ENCODE measurements at regions of chr4 and their contacts with region 1.

Region 1: DNA sequence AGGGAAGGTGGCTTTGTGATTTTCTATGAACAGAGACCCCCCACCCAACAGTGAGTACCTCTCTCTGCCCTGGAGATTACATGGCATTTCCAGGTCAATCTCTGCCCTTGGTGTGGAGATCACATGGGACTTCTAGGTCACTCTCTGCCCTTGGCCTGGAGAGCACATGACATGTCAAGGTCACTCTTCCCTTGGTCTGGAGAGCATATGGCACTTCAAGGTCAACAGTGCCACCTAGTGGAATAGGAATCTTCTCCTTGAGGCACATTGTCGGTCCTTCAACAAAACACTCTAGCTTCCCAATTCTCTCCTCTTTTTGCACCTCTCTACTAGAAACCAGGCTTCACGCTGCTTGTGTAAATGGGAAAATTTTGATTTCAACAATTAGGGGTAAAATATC is 66.2 kb upstream of the TACR3 start:
- DNase-seq: peak; percentile 2
- H3K4me3 Mint-ChIP-seq: no peak overlapping the region
- H3K27ac Mint-ChIP-seq: no peak overlapping the region
- H3K4me1 Mint-ChIP-seq: no peaks in the 10 kb centered on the region
- H3K27me3 Mint-ChIP-seq: no peaks in the 10 kb centered on the region
- CTCF ChIP-seq: peak; percentile 49

Region 2: GRCh38 chr4:103478729-103479128 is 307.3 kb before region 1 on chr4:
- CTCF ChIA-PET with region 1: no interaction called
- intact Hi-C with region 1: loop called (anchors 5 kb)
- DNase-seq: no peak
- H3K4me3 Mint-ChIP-seq: no peak overlapping the region
- H3K27ac Mint-ChIP-seq: no peak overlapping the region
- H3K4me1 Mint-ChIP-seq: no peaks in the 10 kb centered on the region
- H3K27me3 Mint-ChIP-seq: no peaks in the 10 kb centered on the region
- CTCF ChIP-seq: no peak

Region 3: GRCh38 chr4:103634236-103634635 is 151.8 kb before region 1 on chr4:
- CTCF ChIA-PET with region 1: interaction called, 4 read pairs
- intact Hi-C with region 1: loop called (anchors 2 kb)
- DNase-seq: no peak
- H3K4me3 Mint-ChIP-seq: no peak overlapping the region
- H3K27ac Mint-ChIP-seq: no peak overlapping the region
- H3K4me1 Mint-ChIP-seq: no peaks in the 10 kb centered on the region
- H3K27me3 Mint-ChIP-seq: no peaks in the 10 kb centered on the region
- CTCF ChIP-seq: no peak

Region 4: GRCh38 chr4:104064646-104065577 is 278.9 kb after region 1 on chr4:
- CTCF ChIA-PET with region 1: no interaction called
- intact Hi-C with region 1: no loop called
- DNase-seq: peak; percentile 53
- H3K4me3 Mint-ChIP-seq: no peak overlapping the region
- H3K27ac Mint-ChIP-seq: no peak overlapping the region
- H3K4me1 Mint-ChIP-seq: no peaks in the 10 kb centered on the region
- H3K27me3 Mint-ChIP-seq: no peaks in the 10 kb centered on the region
- CTCF ChIP-seq: peak; percentile 48

Measured in Calu3 (cell line).